AG04450 (cell line): ENCODE measurements at regions of chr7 and their contacts with region 1.

Region 1: GRCh38 chr7:16918288-16918895 is 36.6 kb upstream of the AGR3 start:
- DNase-seq: peak; percentile 18
- H3K4me3 ChIP-seq: no peak overlapping the region
- H3K27ac ChIP-seq: no peak overlapping the region
- H3K27me3 ChIP-seq: no peaks in the 10 kb centered on the region
- CTCF ChIP-seq: peak; percentile 71

Region 2: GRCh38 chr7:16695621-16696237 is 222.7 kb before region 1 on chr7:
- CTCF ChIA-PET with region 1: interaction called, 31 read pairs
- POLR2A ChIA-PET with region 1: no interaction called
- DNase-seq: peak; percentile 24
- H3K4me3 ChIP-seq: no peak overlapping the region
- H3K27ac ChIP-seq: no peak overlapping the region
- H3K27me3 ChIP-seq: no peaks in the 10 kb centered on the region
- CTCF ChIP-seq: peak; percentile 67

Region 3: GRCh38 chr7:16801111-16801542 is 117.3 kb before region 1 on chr7:
- CTCF ChIA-PET with region 1: interaction called, 43 read pairs
- POLR2A ChIA-PET with region 1: interaction called, 4 read pairs
- DNase-seq: peak; percentile 34
- H3K4me3 ChIP-seq: no peak overlapping the region
- H3K27ac ChIP-seq: no peak overlapping the region
- H3K27me3 ChIP-seq: no peaks in the 10 kb centered on the region
- CTCF ChIP-seq: peak; percentile 69

Region 4: GRCh38 chr7:16891338-16891737 is 27.1 kb before region 1 on chr7:
- CTCF ChIA-PET with region 1: interaction called, 95 read pairs
- POLR2A ChIA-PET with region 1: no interaction called
- DNase-seq: peak; percentile 30
- H3K4me3 ChIP-seq: no peak overlapping the region
- H3K27ac ChIP-seq: no peak overlapping the region
- H3K27me3 ChIP-seq: no peaks in the 10 kb centered on the region
- CTCF ChIP-seq: peak; percentile 66

Region 5: DNA sequence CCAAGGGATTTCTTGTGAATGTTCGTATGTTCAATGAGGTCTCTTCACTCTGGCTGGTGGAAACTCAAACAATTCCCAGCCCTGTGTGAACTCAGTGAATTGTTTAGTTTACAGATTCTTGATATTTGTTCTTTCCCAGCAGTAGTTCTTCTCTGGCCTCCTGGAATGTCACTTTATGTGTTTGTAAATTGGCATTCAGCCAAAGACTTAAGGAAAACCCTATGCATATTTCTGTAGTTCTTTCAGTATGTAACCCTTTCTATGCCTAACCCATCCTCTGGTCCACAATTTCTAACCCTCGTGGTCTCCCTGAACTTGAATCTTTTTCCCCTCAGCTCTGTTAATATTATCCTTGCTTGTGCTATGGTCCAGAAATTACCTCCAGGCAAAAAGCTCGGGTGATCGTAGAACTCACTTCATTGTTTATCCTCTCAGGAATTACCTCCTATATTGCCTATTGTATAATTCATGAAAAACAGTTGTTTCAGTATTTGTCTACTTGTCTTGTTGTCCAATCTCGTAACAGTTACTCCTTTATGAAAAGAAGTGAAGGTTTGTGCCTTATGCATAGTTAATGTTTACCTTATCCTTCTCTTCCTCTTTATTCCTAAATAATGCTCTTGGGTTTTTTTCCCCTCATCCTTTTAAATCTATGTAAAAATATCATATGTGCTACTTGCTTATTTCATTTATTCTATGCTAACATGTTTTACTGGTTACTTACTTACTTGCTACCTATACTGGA is 12.9 kb before region 1 on chr7:
- CTCF ChIA-PET with region 1: interaction called, 15 read pairs
- POLR2A ChIA-PET with region 1: no interaction called
- DNase-seq: peak; percentile 52
- H3K4me3 ChIP-seq: no peak overlapping the region
- H3K27ac ChIP-seq: no peak overlapping the region
- H3K27me3 ChIP-seq: no peaks in the 10 kb centered on the region
- CTCF ChIP-seq: no peak

Region 6: GRCh38 chr7:17651926-17652385 is 733.6 kb after region 1 on chr7:
- CTCF ChIA-PET with region 1: interaction called, 10 read pairs
- POLR2A ChIA-PET with region 1: no interaction called
- DNase-seq: peak; percentile 67
- H3K4me3 ChIP-seq: no peak overlapping the region
- H3K27ac ChIP-seq: peak overlapping the region; percentile 73
- H3K27me3 ChIP-seq: no peaks in the 10 kb centered on the region
- CTCF ChIP-seq: peak; percentile 53